PC-3 (cell line): ENCODE measurements at regions of chr3 and their contacts with region 1.

Region 1: GRCh38 chr3:17032407-17033034 is 147.8 kb downstream of the PLCL2 start:
- DNase-seq: peak; percentile 70
- ATAC-seq: peak; percentile 84
- H3K4me3 ChIP-seq: no peak overlapping the region
- H3K27ac ChIP-seq: no peak overlapping the region
- H3K4me1 ChIP-seq: peaks cover 15% of the 10 kb centered on the region
- H3K27me3 ChIP-seq: no peaks in the 10 kb centered on the region
- CTCF ChIP-seq: peak; percentile 95

Region 2: DNA sequence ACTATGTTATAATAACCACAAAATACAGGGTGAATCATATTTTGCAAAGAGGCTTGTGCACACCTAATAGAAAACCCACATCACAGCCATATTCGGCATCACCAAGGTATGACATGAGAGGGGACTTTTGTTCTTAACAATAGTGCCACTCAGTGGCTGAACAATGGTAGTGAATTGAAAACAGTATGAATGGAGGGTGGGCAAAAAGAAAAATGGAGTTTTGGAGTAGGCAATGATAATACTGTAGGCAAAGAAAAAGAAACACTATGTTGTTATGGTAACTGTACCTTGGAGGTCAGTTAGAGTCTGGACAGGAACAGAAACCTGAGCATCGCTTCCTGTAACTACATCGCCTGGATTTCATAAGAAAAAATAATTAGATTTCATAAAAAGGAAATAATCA is 200.9 kb after region 1 on chr3:
- CTCF ChIA-PET with region 1: no interaction called
- POLR2A ChIA-PET with region 1: no interaction called
- intact Hi-C with region 1: loop called (anchors 1 kb)
- DNase-seq: peak; percentile 97
- ATAC-seq: peak; percentile 99
- H3K4me3 ChIP-seq: no peak overlapping the region
- H3K27ac ChIP-seq: no peak overlapping the region
- H3K4me1 ChIP-seq: peaks cover 18% of the 10 kb centered on the region
- H3K27me3 ChIP-seq: no peaks in the 10 kb centered on the region
- CTCF ChIP-seq: peak; percentile 93

Region 3: GRCh38 chr3:17755836-17756235 is 723.3 kb after region 1 on chr3:
- CTCF ChIA-PET with region 1: no interaction called
- POLR2A ChIA-PET with region 1: no interaction called
- intact Hi-C with region 1: no loop called
- DNase-seq: no peak
- ATAC-seq: no peak
- H3K4me3 ChIP-seq: no peak overlapping the region
- H3K27ac ChIP-seq: no peak overlapping the region
- H3K4me1 ChIP-seq: no peaks in the 10 kb centered on the region
- H3K27me3 ChIP-seq: no peaks in the 10 kb centered on the region
- CTCF ChIP-seq: no peak